ENCODE measurements at regions of chr5 and their contacts with region 1.

Region 1: DNA sequence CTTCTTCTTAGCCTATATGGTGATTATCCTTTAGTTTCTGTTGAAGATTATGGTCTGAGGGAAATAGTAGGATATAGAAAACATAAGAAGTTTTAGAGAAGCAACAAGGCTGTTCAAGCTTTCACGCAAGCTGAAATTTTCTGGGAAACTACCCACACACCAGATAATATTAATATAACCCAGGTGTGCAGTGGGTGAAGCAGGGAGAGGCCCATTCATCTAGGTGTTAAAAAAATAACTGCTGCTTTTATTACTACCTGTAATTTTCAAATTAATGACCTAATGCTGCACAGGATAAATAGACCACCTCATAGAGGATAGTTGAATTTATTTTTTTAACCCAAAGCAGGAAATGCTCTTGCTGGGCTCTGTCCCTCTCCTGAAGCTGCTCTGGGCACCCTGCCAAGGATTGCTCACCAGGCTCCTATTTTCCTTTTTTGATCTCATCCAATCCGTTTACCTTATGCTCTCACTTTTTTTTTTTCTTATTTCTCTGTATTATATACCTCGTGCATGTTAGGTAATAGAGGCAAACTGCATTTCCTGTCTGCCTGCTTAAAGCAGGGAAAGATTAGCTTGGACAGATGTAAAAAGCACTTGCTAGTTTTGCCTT is 124.3 kb upstream of the SLC12A2 start:
- DNase-seq: peak; percentile 94
- ATAC-seq: peak; percentile 36
- H3K4me3 ChIP-seq: no peak overlapping the region; the same call in 1 of the 2 replicates
- H3K27ac ChIP-seq: peak overlapping the region; percentile 90
- H3K4me1 ChIP-seq: peaks cover 39% of the 10 kb centered on the region
- H3K27me3 ChIP-seq: no peaks in the 10 kb centered on the region
- CTCF ChIP-seq: no peak

Region 2: DNA sequence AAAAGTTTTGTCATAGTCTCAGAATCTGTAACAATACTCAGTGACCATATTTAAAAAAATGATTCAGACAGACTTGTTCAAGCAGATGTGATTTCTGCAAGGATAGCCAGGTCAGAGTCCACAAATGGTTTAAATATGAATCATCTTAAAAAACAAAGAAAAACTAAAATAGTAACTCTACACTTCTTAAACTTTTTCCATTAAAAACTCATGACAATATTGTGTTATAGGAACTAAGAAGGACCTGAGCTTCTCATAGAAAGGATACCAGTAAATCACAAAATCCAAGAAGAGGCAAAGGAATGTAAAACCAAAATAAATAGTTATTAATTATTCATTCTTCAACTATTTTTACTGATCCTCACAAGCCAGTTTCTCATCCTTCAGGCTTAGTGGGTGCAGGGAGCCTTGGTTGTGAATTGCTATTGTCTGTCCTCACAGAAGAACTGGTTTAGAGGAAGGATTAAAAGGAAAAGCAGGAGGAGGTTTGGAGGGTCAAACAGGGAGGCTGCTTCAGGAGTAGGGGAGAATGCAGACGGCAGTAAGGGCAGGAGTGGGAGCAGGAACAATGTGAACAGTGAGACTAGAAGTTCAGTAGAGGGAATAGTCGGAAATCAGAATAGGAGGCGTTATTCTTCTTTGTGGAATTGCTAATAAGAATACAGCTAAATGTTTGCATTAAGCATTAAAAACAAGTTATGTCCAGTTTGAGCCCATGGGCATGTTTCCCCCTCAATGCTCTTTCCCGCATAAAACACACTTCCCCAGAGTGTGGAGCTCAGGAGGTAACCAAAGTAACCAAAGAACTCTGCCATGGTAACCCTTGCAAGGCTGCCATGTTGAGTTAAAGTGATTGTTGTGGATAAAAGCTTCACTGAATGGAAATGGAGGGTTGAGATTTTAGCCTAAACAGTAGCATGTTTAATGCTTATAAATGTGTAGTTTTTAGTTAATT is 145.3 kb before region 1 on chr5:
- CTCF ChIA-PET with region 1: no interaction called
- POLR2A ChIA-PET with region 1: no interaction called
- intact Hi-C with region 1: loop called (anchors 1 kb)
- DNase-seq: peak; percentile 83
- ATAC-seq: peak; percentile 90
- H3K4me3 ChIP-seq: peak overlapping the region; percentile 17; the same call in 1 of the 2 replicates
- H3K27ac ChIP-seq: peak overlapping the region; percentile 73
- H3K4me1 ChIP-seq: peaks cover 36% of the 10 kb centered on the region
- H3K27me3 ChIP-seq: no peaks in the 10 kb centered on the region
- CTCF ChIP-seq: no peak

Region 3: DNA sequence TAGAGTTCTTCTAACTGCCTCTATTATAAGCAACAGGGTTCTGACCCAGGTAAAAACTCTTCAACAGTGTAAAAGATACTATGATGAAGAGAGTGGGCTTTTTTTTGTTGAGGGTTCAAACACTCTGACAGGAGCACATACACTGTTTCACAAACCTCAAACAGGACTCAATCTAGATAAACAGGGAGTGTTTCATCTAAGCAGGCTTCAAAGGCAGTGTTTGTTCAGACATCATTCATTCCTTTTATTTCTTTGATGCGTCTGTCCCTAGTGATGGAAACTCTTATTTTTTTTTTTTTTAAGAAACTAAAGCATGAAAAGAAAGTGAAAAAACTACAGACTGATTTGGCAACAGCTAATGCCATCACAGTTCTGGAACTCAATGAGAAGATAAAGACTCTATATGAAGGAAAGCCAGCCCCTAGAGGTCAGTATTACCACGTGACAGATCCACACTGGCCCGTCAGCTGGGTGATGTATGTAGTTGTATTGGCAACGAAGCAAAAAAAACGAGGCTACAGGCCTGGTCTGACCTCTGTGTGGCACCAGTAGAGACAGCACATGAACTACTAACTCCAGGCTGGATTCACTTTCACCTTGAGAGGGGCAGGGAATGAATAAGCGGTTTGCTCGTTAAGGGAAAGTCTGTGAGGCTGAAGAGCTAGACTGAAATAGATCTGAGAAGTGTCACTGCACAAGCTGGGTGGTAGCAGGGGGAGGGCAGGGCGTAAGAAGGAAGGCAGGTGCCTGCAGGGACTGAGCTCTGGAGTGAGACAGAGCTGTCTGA is 83.8 kb before region 1 on chr5:
- CTCF ChIA-PET with region 1: no interaction called
- POLR2A ChIA-PET with region 1: no interaction called
- intact Hi-C with region 1: loop called (anchors 1 kb)
- DNase-seq: peak; percentile 78
- ATAC-seq: peak; percentile 76
- H3K4me3 ChIP-seq: no peak overlapping the region
- H3K27ac ChIP-seq: 0 out of 2 replicates have a peak overlapping the region, but pooled peaks have one; percentile 9
- H3K4me1 ChIP-seq: peaks cover 17% of the 10 kb centered on the region
- H3K27me3 ChIP-seq: no peaks in the 10 kb centered on the region
- CTCF ChIP-seq: peak; percentile 73

Region 4: DNA sequence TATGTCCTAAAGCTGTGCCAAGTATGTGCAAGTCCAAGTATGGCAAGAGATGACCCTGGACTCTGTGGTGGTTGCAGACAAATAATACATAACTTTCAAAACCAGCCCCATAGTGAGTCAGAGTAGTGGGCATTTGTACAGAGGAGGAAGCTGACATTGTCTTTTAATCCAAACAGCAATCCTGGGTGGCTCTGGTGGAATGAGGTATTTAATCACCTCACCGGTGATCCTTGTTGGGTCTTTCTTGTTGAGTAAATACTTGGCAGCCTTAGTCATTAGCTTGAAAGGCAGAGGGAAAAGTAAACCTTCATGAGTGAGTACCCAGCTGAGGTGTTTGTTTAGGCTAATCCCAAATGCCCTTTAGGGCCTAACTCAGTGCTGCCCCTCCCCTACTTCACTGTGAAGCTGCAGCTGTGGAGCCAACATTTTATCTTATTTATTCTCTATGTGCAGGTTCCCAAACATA is 24.4 kb before region 1 on chr5:
- CTCF ChIA-PET with region 1: no interaction called
- POLR2A ChIA-PET with region 1: interaction called, 4 read pairs
- intact Hi-C with region 1: loop called (anchors 1 kb)
- DNase-seq: peak; percentile 99
- ATAC-seq: peak; percentile 94
- H3K4me3 ChIP-seq: no peak overlapping the region
- H3K27ac ChIP-seq: peak overlapping the region; percentile 89
- H3K4me1 ChIP-seq: peaks cover 41% of the 10 kb centered on the region
- H3K27me3 ChIP-seq: no peaks in the 10 kb centered on the region
- CTCF ChIP-seq: peak; percentile 60

Region 5: GRCh38 chr5:127988146-127988760 is 29.0 kb after region 1 on chr5:
- CTCF ChIA-PET with region 1: no interaction called
- POLR2A ChIA-PET with region 1: no interaction called
- intact Hi-C with region 1: no loop called
- DNase-seq: peak; percentile 97
- ATAC-seq: peak; percentile 91
- H3K4me3 ChIP-seq: no peak overlapping the region
- H3K27ac ChIP-seq: peak overlapping the region; percentile 76
- H3K4me1 ChIP-seq: peaks cover 17% of the 10 kb centered on the region
- H3K27me3 ChIP-seq: no peaks in the 10 kb centered on the region
- CTCF ChIP-seq: no peak

Region 6: GRCh38 chr5:128038643-128039042 is 79.4 kb after region 1 on chr5:
- CTCF ChIA-PET with region 1: no interaction called
- POLR2A ChIA-PET with region 1: interaction called, 4 read pairs
- intact Hi-C with region 1: loop called (anchors 2 kb)
- DNase-seq: peak; percentile 79
- ATAC-seq: peak; percentile 80
- H3K4me3 ChIP-seq: no peak overlapping the region
- H3K27ac ChIP-seq: peak overlapping the region; percentile 79
- H3K4me1 ChIP-seq: peaks cover 27% of the 10 kb centered on the region
- H3K27me3 ChIP-seq: no peaks in the 10 kb centered on the region
- CTCF ChIP-seq: no peak

Region 7: GRCh38 chr5:128163991-128164390 is 204.7 kb after region 1 on chr5:
- CTCF ChIA-PET with region 1: no interaction called
- POLR2A ChIA-PET with region 1: no interaction called
- intact Hi-C with region 1: loop called (anchors 5 kb)
- DNase-seq: peak; percentile 89
- ATAC-seq: peak; percentile 98
- H3K4me3 ChIP-seq: no peak overlapping the region
- H3K27ac ChIP-seq: peak overlapping the region; percentile 55
- H3K4me1 ChIP-seq: peaks cover 14% of the 10 kb centered on the region
- H3K27me3 ChIP-seq: no peaks in the 10 kb centered on the region
- CTCF ChIP-seq: no peak

Measured in PC-3 (cell line).